ACHN (cell line): ENCODE measurements at regions of chr15 and their contacts with region 1.

Region 1: GRCh38 chr15:32994810-32995424 is 199.6 kb downstream of the FMN1 start:
- DNase-seq: peak; percentile 41

Region 2: DNA sequence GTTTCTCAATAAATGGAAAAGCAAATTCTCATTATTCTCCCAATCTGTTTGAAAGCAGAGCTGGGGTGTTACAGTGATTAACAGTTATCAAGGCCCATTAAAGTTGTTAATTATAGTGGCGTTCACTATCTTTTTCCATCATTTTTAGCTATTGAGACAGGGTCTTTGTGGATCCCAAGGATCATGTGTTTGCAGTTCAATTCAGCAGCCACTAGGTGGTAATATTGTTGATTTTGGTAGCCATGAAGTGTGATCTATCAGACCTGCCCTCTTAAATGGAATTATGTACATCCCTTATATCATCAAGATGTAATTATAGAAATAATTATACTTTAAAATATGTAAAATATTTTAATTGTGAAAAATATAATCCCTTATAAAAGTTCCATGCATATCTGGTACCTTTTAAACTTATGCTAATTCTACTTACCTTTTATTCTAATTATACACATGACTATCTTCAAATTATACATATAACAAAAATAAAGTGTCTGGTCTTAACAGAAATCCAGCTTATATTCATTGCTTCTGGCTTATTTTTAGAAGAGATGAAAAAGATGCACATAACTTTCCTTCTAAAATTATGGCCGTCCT is 150.7 kb before region 1 on chr15:
- in situ Hi-C with region 1: loop called (anchors 25 kb)
- DNase-seq: peak; percentile 42